SK-N-SH (cell line): ENCODE measurements at regions of chr15 and their contacts with region 1.

Region 1: DNA sequence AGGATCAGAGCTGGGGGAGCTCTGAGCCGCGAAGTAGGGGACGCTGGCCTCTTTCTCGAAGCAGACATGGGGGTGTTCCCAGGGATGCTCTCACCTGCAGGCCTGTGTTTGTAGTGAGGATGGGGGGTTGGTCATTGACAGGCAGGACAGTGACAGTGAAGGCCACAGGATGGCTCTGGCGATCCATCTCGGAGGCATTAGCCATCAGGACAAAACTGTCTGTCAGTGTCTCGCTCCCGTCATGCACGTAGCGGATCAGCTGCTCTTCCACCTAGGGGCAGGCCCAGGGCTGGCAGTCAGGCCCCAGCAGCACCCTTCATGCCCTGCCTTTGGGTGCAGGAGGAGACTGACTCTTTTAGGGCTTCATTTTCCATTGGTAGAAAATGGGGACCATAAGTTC is 28.0 kb downstream of the CSPG4 start:
- DNase-seq: no peak
- H3K4me3 ChIP-seq: no peak overlapping the region
- H3K27ac ChIP-seq: no peak overlapping the region
- H3K4me1 ChIP-seq: peaks cover 0 to 18% of the 10 kb centered on the region in 2 experiments; a peak in 1 of 4 replicates
- H3K27me3 ChIP-seq: no peaks in the 10 kb centered on the region
- CTCF ChIP-seq: no peak
- EP300 ChIP-seq: no peak
- RAD21 ChIP-seq: peak; percentile 35; the same call in 1 of the 2 replicates

Region 2: GRCh38 chr15:75215107-75216004 is 469.3 kb before region 1 on chr15:
- CTCF ChIA-PET with region 1: no interaction called
- POLR2A ChIA-PET with region 1: no interaction called
- DNase-seq: no peak
- H3K4me3 ChIP-seq: no peak overlapping the region
- H3K27ac ChIP-seq: no peak overlapping the region
- H3K4me1 ChIP-seq: no peaks in the 10 kb centered on the region; a peak in 1 of 4 replicates
- H3K27me3 ChIP-seq: no peaks in the 10 kb centered on the region
- CTCF ChIP-seq: no peak
- EP300 ChIP-seq: no peak
- RAD21 ChIP-seq: no peak

Region 3: GRCh38 chr15:75647370-75648155 is 37.1 kb before region 1 on chr15 and contains the start of gene SNX33:
- CTCF ChIA-PET with region 1: interaction called, 17 read pairs
- POLR2A ChIA-PET with region 1: no interaction called
- DNase-seq: peak; percentile 94
- H3K4me3 ChIP-seq: peak within 1 kb of the TSS; percentile 73 to 98
- H3K27ac ChIP-seq: peak within 1 kb of the TSS; percentile 81 to 96
- H3K4me1 ChIP-seq: peaks cover 13 to 45% of the 10 kb centered on the region in 2 experiments; a peak in 3 of 4 replicates
- H3K27me3 ChIP-seq: no peaks in the 10 kb centered on the region
- CTCF ChIP-seq: peak; percentile 65
- EP300 ChIP-seq: no peak
- RAD21 ChIP-seq: peak; percentile 4; the same call in 1 of the 2 replicates
- polyA plus RNA-seq, gene SNX33: 7.7 and 8.5 TPM in 2 replicates

Region 4: GRCh38 chr15:75705853-75706681 is 21.4 kb after region 1 on chr15:
- CTCF ChIA-PET with region 1: no interaction called
- POLR2A ChIA-PET with region 1: no interaction called
- DNase-seq: no peak
- H3K4me3 ChIP-seq: no peak overlapping the region
- H3K27ac ChIP-seq: no peak overlapping the region; a peak in 1 of 4 replicates
- H3K4me1 ChIP-seq: peaks cover 10 to 42% of the 10 kb centered on the region in 2 experiments; a peak in 3 of 4 replicates
- H3K27me3 ChIP-seq: no peaks in the 10 kb centered on the region
- CTCF ChIP-seq: no peak
- EP300 ChIP-seq: no peak
- RAD21 ChIP-seq: no peak

Region 5: DNA sequence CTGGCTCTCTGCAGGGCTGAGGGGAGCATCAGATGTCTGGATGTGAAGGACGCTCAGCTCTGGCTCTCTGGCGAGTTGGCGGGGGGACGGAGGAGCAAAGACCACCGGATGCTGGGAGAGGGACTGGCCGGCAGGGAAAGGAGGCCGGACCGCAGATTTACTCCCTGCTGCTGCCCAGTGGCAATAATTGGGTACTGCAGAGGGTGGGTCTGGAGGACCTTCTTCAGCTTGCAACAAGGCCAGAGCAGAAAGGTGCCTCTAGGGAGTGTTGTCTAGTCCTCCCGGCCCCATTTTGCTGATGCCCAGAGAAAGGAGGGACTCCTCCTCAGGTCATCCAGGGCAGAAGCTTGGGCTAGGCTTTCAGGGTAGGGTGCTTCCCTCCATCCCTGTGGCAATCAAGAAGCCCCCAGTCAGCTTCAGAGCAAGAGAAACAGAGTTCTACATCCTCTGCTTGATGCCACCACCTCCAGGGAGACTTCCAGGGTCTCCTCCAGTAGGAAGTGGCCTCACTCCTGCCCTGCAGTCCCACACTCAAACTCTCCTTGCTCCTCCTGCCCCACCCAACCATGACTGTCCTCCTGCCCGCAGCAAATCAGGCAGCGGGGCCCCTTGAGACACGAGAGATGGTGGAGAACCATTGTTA is 48.3 kb after region 1 on chr15:
- CTCF ChIA-PET with region 1: interaction called, 77 read pairs
- POLR2A ChIA-PET with region 1: no interaction called
- DNase-seq: peak; percentile 90
- H3K4me3 ChIP-seq: no peak overlapping the region
- H3K27ac ChIP-seq: no peak overlapping the region; a peak in 1 of 4 replicates
- H3K4me1 ChIP-seq: peaks cover 0 to 7% of the 10 kb centered on the region in 2 experiments; a peak in 1 of 4 replicates
- H3K27me3 ChIP-seq: no peaks in the 10 kb centered on the region
- CTCF ChIP-seq: peak; percentile 70
- EP300 ChIP-seq: no peak
- RAD21 ChIP-seq: peak; percentile 70

Region 6: DNA sequence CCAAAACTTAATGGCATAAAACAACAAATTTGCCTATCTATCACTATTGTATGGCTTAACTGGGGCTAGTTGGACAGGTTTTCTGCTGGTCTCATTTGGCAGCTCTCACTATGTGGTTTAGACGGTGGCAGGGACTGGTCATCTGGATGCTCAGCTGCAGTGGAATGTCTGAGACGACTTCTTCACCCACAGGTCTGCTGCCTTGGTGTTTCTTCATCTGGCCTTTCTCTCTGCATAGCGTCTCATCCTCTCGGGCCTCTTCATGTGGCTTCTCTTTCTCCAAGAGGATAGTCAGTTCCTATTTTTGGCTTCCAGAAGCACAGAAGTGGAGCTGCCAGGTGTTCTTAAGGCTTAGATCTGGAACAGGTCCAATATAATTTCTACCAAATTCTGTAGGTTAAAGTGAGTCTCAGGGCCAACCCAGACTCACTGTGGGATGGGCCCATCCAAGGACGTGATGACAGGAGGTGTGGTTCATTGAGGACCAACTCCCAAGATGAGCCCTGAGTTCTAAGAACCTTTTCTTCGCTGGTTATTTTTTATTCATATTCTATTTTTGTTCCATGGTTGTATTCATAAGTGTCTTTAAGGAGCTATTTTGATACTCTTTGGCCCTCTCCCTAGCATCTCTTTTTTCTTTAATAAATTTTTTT is 177.2 kb after region 1 on chr15:
- CTCF ChIA-PET with region 1: no interaction called
- POLR2A ChIA-PET with region 1: no interaction called
- DNase-seq: no peak
- H3K4me3 ChIP-seq: no peak overlapping the region
- H3K27ac ChIP-seq: no peak overlapping the region
- H3K4me1 ChIP-seq: no peaks in the 10 kb centered on the region; a peak in 1 of 4 replicates
- H3K27me3 ChIP-seq: no peaks in the 10 kb centered on the region
- CTCF ChIP-seq: no peak
- EP300 ChIP-seq: no peak
- RAD21 ChIP-seq: no peak

Region 7: DNA sequence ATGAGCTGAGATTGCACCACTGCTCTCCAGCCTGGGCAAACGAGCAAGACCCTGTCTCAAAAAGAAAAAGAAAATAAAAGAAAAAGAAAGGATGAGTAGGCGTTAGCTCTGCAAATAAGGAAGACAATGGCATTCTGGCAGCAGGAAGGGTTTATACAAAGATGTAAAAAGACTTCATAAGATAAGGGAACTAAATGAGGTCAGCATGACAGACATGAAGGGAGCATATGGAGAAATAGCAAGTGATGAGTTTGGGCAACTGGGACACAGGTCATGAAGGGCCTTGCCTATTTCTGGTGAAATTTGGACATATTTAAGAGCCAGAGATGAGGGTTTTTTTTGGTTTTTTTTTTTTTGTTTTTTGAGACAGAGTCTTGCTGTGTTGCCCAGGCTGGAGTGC is 399.6 kb after region 1 on chr15:
- CTCF ChIA-PET with region 1: no interaction called
- POLR2A ChIA-PET with region 1: no interaction called
- DNase-seq: no peak
- H3K4me3 ChIP-seq: no peak overlapping the region
- H3K27ac ChIP-seq: no peak overlapping the region
- H3K4me1 ChIP-seq: no peaks in the 10 kb centered on the region
- H3K27me3 ChIP-seq: no peaks in the 10 kb centered on the region
- CTCF ChIP-seq: no peak
- EP300 ChIP-seq: no peak
- RAD21 ChIP-seq: no peak